Right ventricle myocardium inferior (tissue), 1 donor: ENCODE measurements at regions of chr12 and their contacts with region 1.

Region 1: DNA sequence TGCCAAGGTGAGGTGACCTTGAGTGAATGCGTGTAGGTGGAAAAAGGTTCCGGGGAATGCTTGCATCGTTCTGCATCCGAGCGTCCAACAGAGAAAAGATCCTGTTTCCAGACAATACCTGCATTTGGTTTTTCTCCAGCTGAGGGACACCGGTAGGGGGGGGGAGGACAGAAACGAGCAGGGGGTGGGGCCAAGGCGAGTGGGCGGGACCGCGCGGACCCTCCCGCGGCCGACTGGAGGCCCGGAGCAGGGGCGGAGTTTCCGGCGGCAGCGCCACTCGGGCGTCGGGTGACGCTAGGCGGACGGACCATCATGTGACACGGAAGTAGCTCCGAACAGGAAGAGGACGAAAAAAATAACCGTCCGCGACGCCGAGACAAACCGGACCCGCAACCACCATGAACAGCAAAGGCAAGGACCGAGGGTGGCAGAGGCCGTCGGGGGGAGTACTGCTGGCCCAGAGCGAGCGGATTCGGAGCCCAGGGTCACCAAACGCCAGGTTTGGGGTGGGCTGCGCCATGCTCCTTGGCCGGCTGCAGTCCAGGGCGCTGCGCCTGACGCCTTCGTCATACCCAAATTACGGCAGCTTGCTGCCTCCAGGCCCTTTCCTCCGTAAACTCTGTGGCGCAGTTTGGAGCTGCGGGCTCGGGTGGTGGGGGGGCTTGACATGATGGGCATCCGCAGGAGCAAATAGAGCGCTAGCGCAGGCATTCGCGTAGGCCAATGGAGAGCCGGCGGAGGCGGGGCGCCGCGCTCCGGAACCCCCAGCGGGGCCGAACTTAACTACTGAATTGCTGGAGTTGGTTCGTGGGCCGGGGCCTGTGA is at the start of gene DAZAP2:
- DNase-seq: peak; percentile 97
- ATAC-seq: peak; percentile 99
- total RNA-seq, gene DAZAP2: 136 TPM

Region 2: DNA sequence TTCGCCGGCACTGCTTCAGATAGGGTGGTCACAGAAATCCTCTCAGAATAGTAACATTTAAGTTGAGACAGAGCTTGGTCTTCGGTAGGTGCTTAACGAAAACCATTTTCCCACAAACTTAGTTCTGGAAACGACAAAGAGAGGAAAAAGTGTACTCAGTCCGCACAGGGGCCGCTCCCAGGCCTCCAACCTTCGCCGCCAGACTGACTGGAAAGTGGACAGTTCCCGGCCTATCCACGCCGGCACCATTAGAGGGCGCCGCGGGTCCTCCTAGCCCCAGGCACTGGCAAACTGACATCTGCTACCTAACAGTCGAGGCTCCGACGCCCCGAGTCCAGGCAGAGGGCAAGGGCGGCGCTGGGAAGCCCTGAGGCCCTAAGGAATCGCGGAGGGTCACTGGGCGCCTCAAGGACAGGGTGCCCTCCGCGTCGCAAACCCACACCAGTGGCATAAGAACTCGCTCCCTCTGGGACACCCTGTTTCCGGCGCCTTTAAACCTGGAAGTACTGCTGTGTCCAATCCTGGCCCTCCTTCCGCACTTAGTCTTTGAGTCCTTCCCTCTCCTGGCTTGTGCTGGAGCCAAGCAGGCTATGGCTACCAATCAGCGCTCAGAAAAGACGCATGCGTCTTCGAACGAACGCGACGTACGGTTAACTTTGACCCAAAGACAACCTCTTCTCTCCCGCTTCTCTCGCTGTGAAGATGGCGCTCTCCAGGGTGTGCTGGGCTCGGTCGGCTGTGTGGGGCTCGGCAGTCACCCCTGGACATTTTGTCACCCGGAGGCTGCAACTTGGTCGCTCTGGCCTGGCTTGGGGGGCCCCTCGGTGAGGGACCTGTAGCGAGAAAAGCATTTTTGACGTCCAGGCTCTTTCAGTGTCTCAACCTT is 190.8 kb before region 1 on chr12 and contains the start of gene LETMD1:
- intact Hi-C with region 1: loop called (anchors 10 kb)
- DNase-seq: peak; percentile 94
- ATAC-seq: peak; percentile 99
- total RNA-seq, gene LETMD1: 17.0 TPM

Region 3: DNA sequence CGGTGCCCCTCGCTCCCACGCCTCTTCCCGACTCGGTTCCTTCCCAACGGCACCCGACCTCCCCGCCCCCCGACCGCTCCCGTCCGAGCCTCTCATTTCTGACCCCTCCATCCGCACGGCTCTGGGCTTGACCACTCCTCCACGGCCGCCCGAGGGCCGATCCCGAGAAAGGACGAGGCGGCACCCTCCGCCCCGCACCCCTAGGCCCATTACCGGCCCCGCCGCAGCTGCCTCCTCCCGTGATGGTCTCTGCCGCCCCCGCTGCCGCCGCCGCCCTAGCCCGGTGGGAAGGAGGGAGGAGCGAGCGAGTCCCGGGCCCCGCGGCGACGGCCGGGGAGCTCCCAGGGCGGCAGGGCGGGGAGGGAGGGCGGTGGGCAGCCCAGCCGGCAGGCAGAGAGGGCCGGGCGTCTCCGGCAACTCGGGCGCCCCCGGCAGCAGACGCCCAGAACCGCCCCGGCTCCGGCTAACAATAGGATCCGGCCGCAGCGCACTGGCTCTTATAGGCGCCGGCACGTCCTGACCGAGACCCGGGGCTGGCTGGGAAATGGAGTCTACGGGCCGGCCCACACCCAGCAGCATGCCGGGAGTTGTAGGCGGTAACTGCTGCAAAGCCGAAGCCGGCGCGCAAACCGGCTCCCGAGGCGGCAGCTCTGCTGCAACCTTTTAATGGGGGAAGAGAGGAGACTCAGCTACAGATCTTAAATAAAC is 155.4 kb before region 1 on chr12 and contains the start of gene CSRNP2:
- intact Hi-C with region 1: loop called (anchors 2 kb)
- DNase-seq: peak; percentile 99
- ATAC-seq: peak; percentile 100
- total RNA-seq, gene CSRNP2: 25.7 TPM

Region 4: GRCh38 chr12:51172515-51173431 is 65.9 kb before region 1 on chr12 and contains the start of gene TFCP2:
- intact Hi-C with region 1: loop called (anchors 2 kb)
- DNase-seq: peak; percentile 99
- ATAC-seq: peak; percentile 99
- total RNA-seq, gene TFCP2: 22.3 TPM

Region 5: DNA sequence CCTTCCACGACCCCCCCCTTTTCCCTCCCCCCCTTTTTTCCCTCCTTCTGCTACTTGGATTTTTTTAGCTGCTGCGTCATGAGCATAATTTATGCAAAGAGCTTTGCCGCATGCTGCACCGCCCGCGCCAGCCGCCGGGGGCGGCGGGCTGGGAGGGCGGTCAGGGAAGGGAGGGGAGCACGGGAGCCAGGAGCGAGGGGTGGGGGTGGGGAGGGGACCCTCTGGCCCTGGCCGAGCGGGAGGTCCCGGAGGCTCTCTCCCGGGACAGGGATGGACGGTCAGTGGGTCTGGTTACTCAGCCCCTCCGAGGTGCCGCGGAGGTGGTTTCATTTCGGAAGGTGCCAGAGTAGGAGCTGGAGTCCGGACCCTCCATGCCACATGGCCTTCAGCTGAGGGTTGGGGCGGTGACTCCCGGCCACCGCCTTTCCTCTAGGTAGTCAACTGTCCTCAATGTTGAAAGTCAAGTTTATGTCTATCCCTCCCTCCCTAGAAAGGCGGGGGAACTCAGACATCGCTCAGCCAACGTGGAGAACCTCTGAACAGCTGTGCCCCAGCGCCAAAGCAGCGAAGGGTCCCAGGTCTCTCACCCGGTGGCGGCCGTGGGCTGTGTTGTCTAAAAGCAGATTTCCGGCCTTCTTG is 20.6 kb before region 1 on chr12 and contains the start of gene POU6F1:
- intact Hi-C with region 1: loop called (anchors 1 kb)
- DNase-seq: peak; percentile 83
- ATAC-seq: peak; percentile 93
- total RNA-seq, gene POU6F1: 8.6 TPM